ENCODE measurements at regions of chr14 and their contacts with region 1.

Region 1: GRCh38 chr14:92585981-92586937 is 72.7 kb downstream of the RIN3 start:
- DNase-seq: peak; percentile 58
- H3K4me3 Mint-ChIP-seq: peak overlapping the region; percentile 30
- H3K27ac Mint-ChIP-seq: peak overlapping the region; percentile 98
- H3K4me1 Mint-ChIP-seq: peaks cover 95% of the 10 kb centered on the region
- H3K27me3 Mint-ChIP-seq: peaks cover 5% of the 10 kb centered on the region

Region 2: DNA sequence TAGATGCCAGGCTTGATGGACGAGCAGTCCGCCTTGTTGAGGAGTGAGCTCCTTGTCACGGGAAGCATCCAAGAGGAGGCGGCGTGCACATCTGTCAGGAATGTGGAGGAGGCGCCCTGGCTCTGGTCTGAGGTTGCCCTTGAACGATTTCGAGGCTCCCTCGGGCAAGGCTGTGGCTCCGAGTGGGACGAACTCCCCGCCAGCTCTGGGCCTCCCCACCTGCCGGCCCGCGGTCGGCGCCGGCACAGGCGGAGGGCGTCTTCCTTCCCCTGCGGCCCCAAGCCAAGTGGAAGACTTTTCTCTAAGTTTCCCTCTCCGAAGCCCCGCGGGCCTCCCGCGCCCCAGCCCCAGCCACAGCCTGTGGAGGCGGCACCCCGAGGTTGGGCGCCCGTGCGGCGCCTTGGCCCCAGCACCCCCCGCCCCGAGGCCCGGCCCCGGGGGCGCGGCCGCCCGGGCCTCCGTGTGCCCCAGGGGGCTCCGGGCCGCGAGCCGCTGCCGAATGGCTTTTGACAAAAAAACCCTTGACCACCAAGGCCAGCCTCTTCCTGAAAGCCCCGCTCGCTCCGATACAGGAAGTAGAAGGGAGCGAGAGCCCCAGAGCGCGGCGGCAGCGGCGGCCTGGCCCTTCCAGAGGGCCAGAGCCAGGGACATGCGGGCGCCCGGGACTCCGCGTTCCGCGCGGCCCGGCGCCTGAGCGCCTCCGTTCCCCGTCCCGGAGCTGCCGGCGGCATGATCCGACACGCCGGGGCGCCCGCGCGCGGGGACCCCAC is 72.9 kb before region 1 on chr14 and contains the start of gene RIN3:
- CTCF ChIA-PET with region 1: no interaction called
- DNase-seq: peak; percentile 60
- H3K4me3 Mint-ChIP-seq: peak within 1 kb of the TSS; percentile 70
- H3K27ac Mint-ChIP-seq: peak within 1 kb of the TSS; percentile 35
- H3K4me1 Mint-ChIP-seq: peaks cover 17% of the 10 kb centered on the region
- H3K27me3 Mint-ChIP-seq: peaks cover 83% of the 10 kb centered on the region

Region 3: DNA sequence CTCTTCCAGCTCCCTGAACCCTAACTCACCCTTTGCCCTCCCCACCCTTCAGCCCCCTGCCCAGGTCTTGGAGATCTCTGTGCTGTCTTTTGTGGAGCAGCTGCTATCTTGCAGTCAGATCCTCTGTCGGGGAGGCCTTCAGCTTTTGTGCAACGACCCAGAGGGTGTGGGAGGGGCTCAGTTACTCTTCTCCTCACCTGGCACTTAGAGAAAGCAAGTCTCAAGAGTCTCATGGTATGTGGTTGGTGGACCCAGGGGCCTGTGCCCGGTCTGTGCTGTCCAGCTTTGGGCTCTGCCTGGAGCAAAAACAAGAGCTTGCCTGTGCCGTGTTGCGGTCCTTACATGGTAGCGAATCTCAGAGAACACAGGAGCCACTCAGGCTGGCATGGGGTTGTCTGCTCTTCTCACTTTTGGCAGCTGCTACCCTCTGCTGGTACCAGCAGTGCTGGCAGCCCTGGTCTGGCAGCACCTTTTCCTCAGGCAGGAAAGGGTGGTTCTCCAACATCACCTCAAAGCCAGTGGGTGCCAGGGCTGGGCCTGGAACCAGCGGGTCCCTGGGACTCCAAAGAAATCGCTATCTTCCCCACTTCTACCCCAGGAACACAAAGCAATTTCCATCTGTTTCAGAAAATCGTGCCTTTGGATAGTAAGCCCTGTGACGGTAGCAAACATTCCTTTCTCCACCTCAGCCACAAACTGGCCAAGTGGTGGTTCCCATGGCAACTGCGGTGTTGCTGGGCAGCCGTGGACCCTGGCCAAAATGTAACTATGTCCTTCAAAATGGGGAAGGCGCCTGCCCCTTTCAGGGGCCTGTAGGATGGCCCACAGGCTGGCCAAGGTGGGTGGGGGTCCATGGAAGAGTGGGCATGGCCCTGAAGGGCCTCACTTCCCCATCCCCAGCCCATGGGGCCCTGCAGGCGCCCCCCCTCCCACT is 17.3 kb after region 1 on chr14:
- CTCF ChIA-PET with region 1: interaction called, 11 read pairs
- DNase-seq: peak; percentile 76
- H3K4me3 Mint-ChIP-seq: no peak overlapping the region
- H3K27ac Mint-ChIP-seq: no peak overlapping the region
- H3K4me1 Mint-ChIP-seq: peaks cover 28% of the 10 kb centered on the region
- H3K27me3 Mint-ChIP-seq: peaks cover 34% of the 10 kb centered on the region

Region 4: DNA sequence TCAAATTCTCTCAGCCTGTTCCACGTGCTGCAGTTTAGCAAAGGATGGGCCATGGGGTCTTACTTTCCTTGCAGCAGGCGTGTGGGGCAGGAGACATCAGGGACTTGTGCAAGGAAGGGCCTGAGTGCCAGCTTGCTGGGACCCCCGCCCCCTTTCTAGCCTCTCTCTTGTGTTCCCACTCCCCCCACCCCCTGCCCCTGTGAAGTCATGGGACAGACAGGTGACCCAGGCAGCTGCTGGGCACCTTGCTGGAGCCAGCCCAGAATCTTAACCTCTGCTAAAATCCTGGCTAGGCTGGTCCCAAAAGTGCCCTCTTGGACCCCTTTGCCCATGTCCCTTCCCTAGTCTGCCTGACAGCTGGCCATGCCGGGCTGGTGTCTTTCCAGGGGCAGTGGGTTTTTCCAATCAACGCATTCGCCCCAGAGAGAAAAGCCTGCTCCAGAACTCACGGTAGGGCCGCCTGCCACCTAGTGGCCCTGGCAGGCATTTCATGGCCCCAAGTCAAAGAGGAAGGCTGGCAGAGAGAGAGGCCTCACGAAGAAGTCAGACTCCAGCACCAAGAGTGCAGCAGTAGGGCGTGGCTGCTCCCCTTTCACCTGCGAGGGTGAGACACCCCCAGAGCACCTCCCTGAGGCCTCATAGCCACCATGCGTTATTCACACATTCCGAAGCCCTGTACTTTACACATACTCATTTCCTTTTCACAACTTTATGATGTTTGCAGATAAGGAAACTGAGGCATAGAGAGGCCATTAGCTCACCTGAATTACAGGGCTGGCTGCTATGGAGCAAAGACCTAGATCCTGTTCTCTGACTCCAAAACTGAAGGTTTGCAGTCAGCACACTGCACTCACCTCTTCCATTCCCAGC is 94.8 kb after region 1 on chr14:
- CTCF ChIA-PET with region 1: interaction called, 27 read pairs
- DNase-seq: peak; percentile 78
- H3K4me3 Mint-ChIP-seq: no peak overlapping the region
- H3K27ac Mint-ChIP-seq: peak overlapping the region; percentile 59
- H3K4me1 Mint-ChIP-seq: peaks cover 33% of the 10 kb centered on the region
- H3K27me3 Mint-ChIP-seq: no peaks in the 10 kb centered on the region

Region 5: GRCh38 chr14:92690171-92691036 is 104.1 kb after region 1 on chr14:
- CTCF ChIA-PET with region 1: interaction called, 11 read pairs
- DNase-seq: no peak
- H3K4me3 Mint-ChIP-seq: no peak overlapping the region
- H3K27ac Mint-ChIP-seq: no peak overlapping the region
- H3K4me1 Mint-ChIP-seq: peaks cover 15% of the 10 kb centered on the region
- H3K27me3 Mint-ChIP-seq: peaks cover 13% of the 10 kb centered on the region

Region 6: DNA sequence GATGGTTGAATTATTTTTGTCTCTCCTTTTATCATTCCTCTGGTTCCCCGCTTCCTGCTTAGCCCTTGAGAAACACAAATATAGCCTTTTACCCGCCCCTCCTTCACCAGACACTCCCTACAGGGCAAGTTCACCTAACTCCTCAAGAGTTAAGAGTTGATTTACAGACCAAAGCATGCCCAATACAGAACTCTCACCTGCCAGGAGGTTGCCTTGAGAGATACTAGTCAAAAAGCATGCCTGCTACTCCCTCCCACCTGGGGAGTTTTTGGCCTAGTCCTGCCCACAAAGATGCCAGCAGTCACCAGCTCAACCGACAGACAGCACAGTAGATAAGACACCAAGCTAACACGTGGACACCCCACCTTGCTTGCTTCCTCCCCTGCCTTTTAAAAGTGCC is 150.9 kb after region 1 on chr14:
- CTCF ChIA-PET with region 1: no interaction called
- DNase-seq: no peak
- H3K4me3 Mint-ChIP-seq: no peak overlapping the region
- H3K27ac Mint-ChIP-seq: peak overlapping the region; percentile 29
- H3K4me1 Mint-ChIP-seq: peaks cover 13% of the 10 kb centered on the region
- H3K27me3 Mint-ChIP-seq: peaks cover 11% of the 10 kb centered on the region

Measured in activated naive CD4-positive, alpha-beta T cell treated with anti-CD3 and anti-CD28 coated beads, Interleukin-2, amount 10 ng/mL, durations not matched to agents 7 days and 5 days (primary cell).